Adrenal gland (tissue), 19 donors: ENCODE measurements at regions of chr1 and their contacts with region 1.

Region 1: GRCh38 chr1:159936273-159936904 is 9.0 kb downstream of the IGSF9 start:
- DNase-seq: peak; percentile 60 to 80 (median 66)
- H3K4me3 ChIP-seq: no peak overlapping the region
- H3K27ac ChIP-seq: no peak overlapping the region
- H3K4me1 ChIP-seq: peaks cover 0 to 5% of the 10 kb centered on the region in 2 donors
- H3K27me3 ChIP-seq: peaks cover 11% of the 10 kb centered on the region
- CTCF ChIP-seq: peak; percentile 94 to 98 (median 97)
- POLR2A ChIP-seq: no peak

Region 2: DNA sequence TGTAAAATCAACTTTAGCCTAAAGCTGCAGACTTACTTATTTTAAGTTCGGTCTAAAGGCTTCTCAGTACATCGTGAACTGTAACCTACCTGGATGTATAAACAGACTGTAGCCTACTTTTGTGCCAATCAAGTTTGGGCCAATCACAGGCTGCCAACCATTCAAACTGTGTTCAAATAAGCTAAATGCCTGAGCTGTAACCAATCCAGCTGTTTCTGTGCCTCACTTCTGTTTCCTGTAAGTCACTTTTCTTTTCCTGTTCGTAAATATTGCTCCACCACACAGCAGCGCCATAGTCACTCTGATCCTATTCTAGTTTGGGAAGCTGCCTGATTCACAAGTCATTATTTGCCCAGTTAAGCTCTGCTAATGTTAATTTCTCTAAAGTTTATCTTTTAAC is 55.1 kb after region 1 on chr1:
- intact Hi-C with region 1: no loop called
- DNase-seq: peak in 1 of 7 donors; percentile 4
- H3K4me3 ChIP-seq: no peak overlapping the region
- H3K27ac ChIP-seq: no peak overlapping the region
- H3K4me1 ChIP-seq: no peaks in the 10 kb centered on the region
- H3K27me3 ChIP-seq: peaks cover 12% of the 10 kb centered on the region
- CTCF ChIP-seq: no peak
- POLR2A ChIP-seq: no peak

Region 3: GRCh38 chr1:160006312-160006940 is 70.0 kb after region 1 on chr1:
- intact Hi-C with region 1: loop called (anchors 1 to 5 kb)
- DNase-seq: peak; percentile 50 to 79 (median 69)
- H3K4me3 ChIP-seq: no peak overlapping the region
- H3K27ac ChIP-seq: no peak overlapping the region
- H3K4me1 ChIP-seq: no peaks in the 10 kb centered on the region
- H3K27me3 ChIP-seq: no peaks in the 10 kb centered on the region
- CTCF ChIP-seq: peak; percentile 50 to 82 (median 60)
- POLR2A ChIP-seq: no peak